Dorsolateral prefrontal cortex (tissue), 120 donors: ENCODE measurements at regions of chr2 and their contacts with region 1.

Region 1: GRCh38 chr2:70703900-70704549 is 64.0 kb downstream of the ADD2 start:
- DNase-seq: peak in 7 of 10 donors; percentile 32 to 80 (median 64)
- H3K4me3 ChIP-seq: no peak overlapping the region
- H3K27ac ChIP-seq: peak overlapping the region in 22 of 59 donors; percentile 4 to 69 (median 47)
- H3K27me3 ChIP-seq: no peaks in the 10 kb centered on the region
- CTCF ChIP-seq: no peak

Region 2: GRCh38 chr2:70751881-70752280 is 47.9 kb after region 1 on chr2:
- intact Hi-C with region 1: loop called in 1 of 2 experiments (anchors 10 kb)
- DNase-seq: no peak
- H3K4me3 ChIP-seq: no peak overlapping the region
- H3K27ac ChIP-seq: no peak overlapping the region
- H3K27me3 ChIP-seq: peaks cover 0 to 8% (median 0%) of the 10 kb centered on the region in 45 donors
- CTCF ChIP-seq: no peak